ENCODE measurements at regions of chr19 and their contacts with region 1.

Region 1: DNA sequence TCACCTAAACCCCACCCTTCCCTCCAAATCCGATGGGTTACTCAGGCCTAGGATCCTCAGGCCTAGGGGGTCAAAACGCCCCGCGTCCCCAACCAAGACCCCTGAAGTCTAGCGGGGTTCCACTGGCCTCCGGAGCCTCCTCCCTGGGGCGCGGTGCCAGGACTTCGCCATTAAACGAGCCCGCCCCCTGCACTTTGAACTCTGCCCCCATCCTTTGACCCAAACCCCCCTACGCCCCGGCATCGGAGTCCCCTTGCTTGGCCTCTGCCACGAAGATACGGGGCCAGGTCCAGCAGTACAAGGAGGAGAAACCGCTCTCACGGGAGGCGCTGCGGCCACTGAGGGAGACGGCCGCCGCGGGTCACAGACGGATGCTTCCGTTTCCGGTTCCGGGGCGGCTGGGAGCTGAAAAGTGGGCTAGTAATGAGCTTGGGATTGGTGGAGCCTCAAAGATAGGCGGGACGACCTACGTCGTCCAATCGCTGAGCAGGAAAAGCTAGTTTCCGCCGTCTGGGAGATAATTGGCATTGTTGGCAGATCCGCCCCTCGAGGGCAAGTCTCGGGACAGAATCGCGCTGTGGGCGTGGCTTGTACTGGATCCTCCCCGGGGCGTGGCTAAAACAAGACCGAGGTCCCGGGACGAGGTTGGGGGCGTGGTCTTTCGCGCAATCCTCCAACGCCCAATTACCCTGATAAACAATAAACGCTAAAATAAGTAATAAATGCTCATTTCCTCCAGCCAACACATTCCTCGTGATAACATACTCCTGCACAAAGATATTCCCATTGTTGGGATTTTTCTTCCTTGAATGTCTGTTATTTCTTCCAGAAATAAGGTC is 5.7 kb upstream of the ZNF77 start:
- DNase-seq: peak; percentile 100
- ATAC-seq: peak; percentile 94
- H3K4me3 ChIP-seq: peak overlapping the region; percentile 73 to 91 (median 84)
- H3K4me3 Mint-ChIP-seq: peak overlapping the region; percentile 94
- H3K27ac ChIP-seq: peak overlapping the region; percentile 92 to 98
- H3K27ac Mint-ChIP-seq: peak overlapping the region; percentile 99
- H3K4me1 ChIP-seq: peaks cover 8 to 21% of the 10 kb centered on the region in 2 donors
- H3K4me1 Mint-ChIP-seq: peaks cover 28% of the 10 kb centered on the region
- H3K27me3 ChIP-seq: no peaks in the 10 kb centered on the region
- H3K27me3 Mint-ChIP-seq: no peaks in the 10 kb centered on the region
- CTCF ChIP-seq: no peak

Region 2: GRCh38 chr19:2867025-2867991 is 83.2 kb before region 1 on chr19 and contains the start of gene ZNF556:
- CTCF ChIA-PET with region 1: no interaction called
- POLR2A ChIA-PET with region 1: no interaction called
- intact Hi-C with region 1: no loop called
- DNase-seq: no peak
- ATAC-seq: no peak
- H3K4me3 ChIP-seq: no peak within 1 kb of the TSS
- H3K4me3 Mint-ChIP-seq: no peak within 1 kb of the TSS
- H3K27ac ChIP-seq: no peak within 1 kb of the TSS
- H3K27ac Mint-ChIP-seq: no peak within 1 kb of the TSS
- H3K4me1 ChIP-seq: no peaks in the 10 kb centered on the region
- H3K4me1 Mint-ChIP-seq: peaks cover 5% of the 10 kb centered on the region
- H3K27me3 ChIP-seq: no peaks in the 10 kb centered on the region
- H3K27me3 Mint-ChIP-seq: peaks cover 9% of the 10 kb centered on the region
- CTCF ChIP-seq: no peak
- total RNA-seq, gene ZNF556: not detected in 2 replicates

Region 3: GRCh38 chr19:2887391-2887914 is 63.1 kb before region 1 on chr19:
- CTCF ChIA-PET with region 1: interaction called, 17 read pairs
- POLR2A ChIA-PET with region 1: no interaction called
- intact Hi-C with region 1: loop called (anchors 2 kb)
- DNase-seq: peak; percentile 71
- ATAC-seq: peak; percentile 58
- H3K4me3 ChIP-seq: no peak overlapping the region
- H3K4me3 Mint-ChIP-seq: peak overlapping the region; percentile 27
- H3K27ac ChIP-seq: peak overlapping the region in 1 of 2 donors; percentile 72
- H3K27ac Mint-ChIP-seq: peak overlapping the region; percentile 53
- H3K4me1 ChIP-seq: peaks cover 3 to 16% of the 10 kb centered on the region in 2 donors
- H3K4me1 Mint-ChIP-seq: peaks cover 18% of the 10 kb centered on the region
- H3K27me3 ChIP-seq: no peaks in the 10 kb centered on the region
- H3K27me3 Mint-ChIP-seq: peaks cover 4% of the 10 kb centered on the region
- CTCF ChIP-seq: peak; percentile 80

Region 4: GRCh38 chr19:2923510-2923909 is 27.0 kb before region 1 on chr19:
- CTCF ChIA-PET with region 1: no interaction called
- POLR2A ChIA-PET with region 1: no interaction called
- intact Hi-C with region 1: no loop called
- DNase-seq: no peak
- ATAC-seq: no peak
- H3K4me3 ChIP-seq: no peak overlapping the region
- H3K4me3 Mint-ChIP-seq: no peak overlapping the region
- H3K27ac ChIP-seq: no peak overlapping the region
- H3K27ac Mint-ChIP-seq: no peak overlapping the region
- H3K4me1 ChIP-seq: no peaks in the 10 kb centered on the region
- H3K4me1 Mint-ChIP-seq: no peaks in the 10 kb centered on the region
- H3K27me3 ChIP-seq: no peaks in the 10 kb centered on the region
- H3K27me3 Mint-ChIP-seq: no peaks in the 10 kb centered on the region
- CTCF ChIP-seq: no peak

Region 5: DNA sequence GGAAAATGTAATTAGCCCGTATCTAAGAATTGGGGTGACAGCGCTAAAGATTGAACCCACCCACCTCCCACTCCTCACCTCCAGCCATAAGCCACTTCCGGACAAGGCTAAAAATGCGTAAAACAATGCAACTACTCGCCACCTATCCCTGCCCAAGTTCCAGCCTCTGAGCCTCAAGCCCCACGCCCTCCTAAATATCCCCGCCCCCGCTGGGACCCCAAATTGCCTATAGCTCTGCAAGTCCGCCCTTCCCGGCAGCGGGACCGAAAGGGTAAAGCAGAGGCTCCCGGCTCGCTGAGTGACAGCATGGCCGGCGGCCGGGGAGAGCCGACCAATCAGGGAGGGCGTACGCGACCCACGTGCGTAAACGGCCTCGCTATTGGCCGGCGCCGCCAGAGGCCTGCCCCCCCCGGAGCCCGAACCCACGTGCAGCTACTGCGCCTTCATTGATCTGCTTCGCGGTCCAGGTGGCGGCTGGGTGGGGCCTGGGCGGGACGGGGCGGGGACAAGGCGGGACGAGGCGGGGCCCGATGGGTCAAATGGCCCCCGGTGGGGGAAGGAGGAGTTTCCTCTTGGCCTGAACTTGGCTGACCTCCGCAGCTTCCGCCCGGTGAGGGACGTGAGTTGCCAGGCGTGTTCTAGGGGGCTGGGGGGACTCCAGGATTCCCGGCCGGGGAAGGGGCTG is 26.6 kb after region 1 on chr19 and contains the start of gene TLE6:
- CTCF ChIA-PET with region 1: interaction called, 3 read pairs
- POLR2A ChIA-PET with region 1: no interaction called
- intact Hi-C with region 1: loop called (anchors 2 kb)
- DNase-seq: peak; percentile 96
- ATAC-seq: peak; percentile 99
- H3K4me3 ChIP-seq: peak within 1 kb of the TSS; percentile 55 to 77 (median 65)
- H3K4me3 Mint-ChIP-seq: peak within 1 kb of the TSS; percentile 96
- H3K27ac ChIP-seq: peak within 1 kb of the TSS in 1 of 2 donors; percentile 31
- H3K27ac Mint-ChIP-seq: peak within 1 kb of the TSS; percentile 72
- H3K4me1 ChIP-seq: peaks cover 14 to 27% of the 10 kb centered on the region in 2 donors
- H3K4me1 Mint-ChIP-seq: peaks cover 18% of the 10 kb centered on the region
- H3K27me3 ChIP-seq: peaks cover 0 to 5% (median 0%) of the 10 kb centered on the region in 4 experiments
- H3K27me3 Mint-ChIP-seq: no peaks in the 10 kb centered on the region
- CTCF ChIP-seq: no peak
- total RNA-seq, gene TLE6: 0.61 and 1.5 TPM in 2 replicates

Region 6: DNA sequence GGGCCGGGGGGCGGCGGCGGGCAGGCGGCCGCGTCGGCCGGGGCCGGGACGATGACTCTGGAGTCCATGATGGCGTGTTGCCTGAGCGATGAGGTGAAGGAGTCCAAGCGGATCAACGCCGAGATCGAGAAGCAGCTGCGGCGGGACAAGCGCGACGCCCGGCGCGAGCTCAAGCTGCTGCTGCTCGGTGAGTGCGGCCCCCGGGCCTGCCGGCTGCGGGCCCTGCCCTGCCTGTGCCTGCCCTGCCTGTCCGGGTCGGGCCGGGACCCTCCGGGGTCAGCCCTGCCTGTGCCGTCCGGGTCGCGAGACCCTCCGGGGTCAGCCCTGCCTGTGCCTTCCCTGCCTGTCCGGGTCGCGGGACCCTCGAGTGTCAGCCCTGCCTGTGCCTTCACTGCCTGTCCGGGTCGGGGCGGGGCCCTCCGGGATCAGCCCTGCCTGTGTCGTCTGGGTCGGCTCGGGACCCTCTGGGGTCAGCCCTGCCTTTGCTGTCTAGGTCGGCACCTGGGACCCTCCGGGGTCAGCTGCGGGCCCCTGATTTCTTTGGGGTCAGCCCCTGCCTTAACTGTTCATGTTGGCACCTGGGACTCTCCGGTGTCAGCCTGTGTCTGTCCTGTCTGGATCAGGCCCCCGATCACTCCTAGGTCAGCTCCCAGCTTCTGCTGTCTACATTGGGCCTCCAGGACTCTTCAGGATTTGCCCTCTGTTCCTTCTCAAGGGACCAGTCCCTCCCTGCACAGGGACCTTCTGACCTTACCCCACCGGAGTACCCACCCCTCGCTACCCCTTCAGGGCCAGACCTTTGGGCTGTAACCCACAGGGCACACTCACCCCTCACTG is 144.3 kb after region 1 on chr19:
- CTCF ChIA-PET with region 1: interaction called, 5 read pairs
- POLR2A ChIA-PET with region 1: no interaction called
- intact Hi-C with region 1: loop called (anchors 1 kb)
- DNase-seq: peak; percentile 70
- ATAC-seq: peak; percentile 37
- H3K4me3 ChIP-seq: peak overlapping the region in 4 of 5 experiments; percentile 41 to 71 (median 58)
- H3K4me3 Mint-ChIP-seq: peak overlapping the region; percentile 84
- H3K27ac ChIP-seq: no peak overlapping the region
- H3K27ac Mint-ChIP-seq: peak overlapping the region; percentile 46
- H3K4me1 ChIP-seq: peaks cover 35 to 46% of the 10 kb centered on the region in 2 donors
- H3K4me1 Mint-ChIP-seq: peaks cover 28% of the 10 kb centered on the region
- H3K27me3 ChIP-seq: peaks cover 0 to 24% (median 10%) of the 10 kb centered on the region in 4 experiments
- H3K27me3 Mint-ChIP-seq: peaks cover 8% of the 10 kb centered on the region
- CTCF ChIP-seq: no peak

Region 7: GRCh38 chr19:3125900-3126524 is 175.5 kb after region 1 on chr19:
- CTCF ChIA-PET with region 1: interaction called, 15 read pairs
- POLR2A ChIA-PET with region 1: no interaction called
- intact Hi-C with region 1: no loop called
- DNase-seq: peak; percentile 65
- ATAC-seq: peak; percentile 69
- H3K4me3 ChIP-seq: no peak overlapping the region
- H3K4me3 Mint-ChIP-seq: no peak overlapping the region
- H3K27ac ChIP-seq: no peak overlapping the region
- H3K27ac Mint-ChIP-seq: peak overlapping the region; percentile 61
- H3K4me1 ChIP-seq: peaks cover 8 to 10% of the 10 kb centered on the region in 2 donors
- H3K4me1 Mint-ChIP-seq: peaks cover 21% of the 10 kb centered on the region
- H3K27me3 ChIP-seq: no peaks in the 10 kb centered on the region
- H3K27me3 Mint-ChIP-seq: no peaks in the 10 kb centered on the region
- CTCF ChIP-seq: peak; percentile 73

Region 8: DNA sequence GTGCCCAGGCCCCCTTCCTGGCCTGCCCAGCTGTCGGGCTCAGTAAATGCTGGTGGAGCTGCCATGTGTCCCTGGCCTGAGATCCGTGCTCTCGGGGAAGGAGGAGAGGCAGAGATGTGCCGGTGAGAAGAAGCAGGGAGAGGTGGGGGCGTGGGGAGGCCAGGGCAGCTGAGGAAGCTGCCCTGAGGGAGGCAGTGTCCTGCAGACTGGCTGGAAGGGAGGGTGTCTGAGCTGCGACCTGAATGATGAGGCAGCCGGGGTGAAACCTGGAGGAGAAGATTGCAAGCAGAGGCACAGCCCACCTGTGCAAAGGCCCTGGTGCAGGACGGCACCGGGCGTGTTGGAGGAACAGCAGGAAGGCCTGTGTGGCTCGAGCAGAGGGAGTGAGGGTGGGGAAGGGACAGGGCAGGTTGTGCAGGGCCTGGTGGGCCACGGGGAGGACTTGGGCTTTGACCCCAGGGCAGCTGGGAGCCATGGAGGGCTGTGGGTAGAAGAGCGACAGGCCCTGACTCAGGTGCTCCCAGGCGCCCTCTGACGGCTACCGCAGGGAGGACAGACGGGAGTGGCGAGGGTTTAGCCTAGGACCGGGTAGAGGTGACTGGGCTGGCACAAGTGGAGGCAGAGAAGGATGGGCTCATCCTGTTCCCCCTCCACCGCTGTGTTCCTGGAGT is 260.0 kb after region 1 on chr19:
- CTCF ChIA-PET with region 1: interaction called, 11 read pairs
- POLR2A ChIA-PET with region 1: interaction called, 4 read pairs
- intact Hi-C with region 1: no loop called
- DNase-seq: peak; percentile 72
- ATAC-seq: peak; percentile 91
- H3K4me3 ChIP-seq: no peak overlapping the region
- H3K4me3 Mint-ChIP-seq: no peak overlapping the region
- H3K27ac ChIP-seq: no peak overlapping the region
- H3K27ac Mint-ChIP-seq: peak overlapping the region; percentile 59
- H3K4me1 ChIP-seq: no peaks in the 10 kb centered on the region
- H3K4me1 Mint-ChIP-seq: peaks cover 4% of the 10 kb centered on the region
- H3K27me3 ChIP-seq: no peaks in the 10 kb centered on the region
- H3K27me3 Mint-ChIP-seq: no peaks in the 10 kb centered on the region
- CTCF ChIP-seq: peak; percentile 75